ENCODE measurements at regions of chr1 and their contacts with region 1.

Region 1: GRCh38 chr1:18913065-18913835 is 10.9 kb upstream of the ALDH4A1 start:
- DNase-seq: no peak
- H3K4me3 ChIP-seq: no peak overlapping the region
- CTCF ChIP-seq: peak; percentile 100

Region 2: DNA sequence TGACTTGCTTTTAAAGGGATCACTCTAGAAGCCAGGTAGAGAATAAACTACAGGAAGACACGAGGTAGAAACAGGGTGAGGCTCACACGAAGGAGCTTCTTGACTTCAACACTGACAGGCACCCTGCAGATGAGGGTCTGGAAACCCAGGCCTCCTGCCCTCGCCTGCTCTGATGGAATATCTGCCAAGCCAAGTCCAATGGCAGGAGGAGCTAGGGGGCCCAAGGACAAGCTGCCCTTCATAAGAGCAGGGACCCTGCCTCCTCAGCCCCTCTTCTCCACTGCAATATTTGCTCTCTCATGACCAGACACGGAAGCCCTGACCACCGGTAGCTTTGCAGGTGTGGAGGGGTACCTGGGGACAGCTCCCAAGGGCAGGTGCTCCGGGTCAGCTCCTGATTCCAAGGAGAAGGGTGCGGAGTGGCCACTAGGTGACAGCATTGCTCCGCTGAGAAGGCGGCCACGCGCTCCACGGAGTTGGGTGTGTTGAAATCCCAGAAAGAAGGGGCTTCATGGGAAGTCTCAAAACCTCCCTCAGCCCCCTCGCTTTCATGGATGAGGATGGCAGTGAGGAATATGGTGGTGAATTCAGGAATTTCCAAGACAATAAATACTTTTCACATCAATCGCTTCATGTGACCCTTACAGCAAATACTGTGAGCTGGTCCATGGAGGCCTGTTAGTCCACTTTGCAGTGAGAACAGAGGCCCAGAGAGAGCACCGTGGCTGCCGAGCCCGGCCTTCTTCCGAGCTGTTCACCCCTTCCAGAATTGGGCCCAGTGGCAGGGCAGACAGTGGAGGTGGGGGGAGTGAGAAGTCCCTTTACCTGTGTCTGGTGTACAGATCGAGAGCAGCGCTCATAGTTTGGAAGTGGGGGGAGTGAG is 315.8 kb before region 1 on chr1:
- CTCF ChIA-PET with region 1: interaction called, 15 read pairs
- POLR2A ChIA-PET with region 1: no interaction called
- DNase-seq: no peak
- H3K4me3 ChIP-seq: no peak overlapping the region
- CTCF ChIP-seq: peak; percentile 92

Region 3: DNA sequence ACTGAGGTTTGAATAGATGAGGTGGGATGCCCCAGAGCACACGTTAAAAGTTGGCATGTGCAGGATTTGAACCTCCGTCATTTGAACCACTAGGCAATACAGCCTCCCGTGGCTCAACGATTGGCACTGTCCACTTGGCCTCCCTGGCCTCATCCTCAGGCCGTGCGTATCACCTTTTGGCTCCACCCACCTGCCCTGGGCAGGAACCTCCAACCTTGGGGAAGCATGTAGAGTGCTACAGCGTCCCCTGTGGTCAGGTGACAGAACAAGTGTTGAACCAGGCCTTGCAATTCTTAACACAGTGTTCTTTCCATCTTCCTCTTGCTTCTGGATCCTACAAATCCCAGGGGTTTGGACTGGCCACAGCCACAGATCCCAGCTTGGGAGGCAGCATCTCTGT is 170.0 kb before region 1 on chr1:
- CTCF ChIA-PET with region 1: no interaction called
- POLR2A ChIA-PET with region 1: no interaction called
- DNase-seq: no peak
- H3K4me3 ChIP-seq: no peak overlapping the region
- CTCF ChIP-seq: no peak

Region 4: GRCh38 chr1:18820791-18821641 is 92.2 kb before region 1 on chr1:
- CTCF ChIA-PET with region 1: no interaction called
- POLR2A ChIA-PET with region 1: no interaction called
- DNase-seq: no peak
- H3K4me3 ChIP-seq: no peak overlapping the region
- CTCF ChIP-seq: peak; percentile 97

Region 5: DNA sequence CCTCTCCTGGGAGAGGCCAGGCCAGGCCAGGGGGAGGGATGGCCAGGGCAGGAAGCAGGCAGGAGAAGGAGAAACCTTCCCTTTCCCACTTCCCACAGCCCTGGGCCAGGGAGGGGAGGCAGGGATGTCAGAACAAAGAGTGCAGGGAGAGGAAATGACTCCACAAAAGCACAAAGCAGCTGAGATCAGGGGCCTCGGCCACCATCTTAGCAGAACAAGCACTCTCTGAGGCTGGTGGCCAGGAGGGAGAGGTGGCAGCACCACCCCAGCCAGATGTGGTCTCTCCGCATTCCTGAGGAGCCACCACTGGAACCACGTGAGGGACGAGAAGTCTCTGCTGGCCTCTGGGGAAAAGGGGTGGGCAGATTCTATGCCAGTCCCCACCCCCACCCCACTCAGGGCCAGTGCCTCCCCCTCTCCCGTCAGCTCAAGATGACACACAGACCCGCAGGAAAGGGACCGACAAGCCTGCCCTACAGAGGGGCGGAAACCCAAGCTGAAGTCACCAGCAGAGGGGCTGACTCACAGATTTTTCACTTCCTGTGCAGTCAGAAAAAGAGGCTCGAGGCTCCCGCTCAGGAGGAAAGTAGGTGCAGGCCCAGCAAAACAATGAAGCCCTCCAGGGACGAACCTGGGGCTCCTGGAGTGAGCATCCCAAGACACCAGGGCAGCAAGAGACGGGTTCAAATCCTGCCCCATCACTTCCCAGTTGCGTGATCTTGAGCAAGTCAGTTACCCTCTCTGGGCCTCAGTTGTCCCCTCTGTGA is 13.2 kb after region 1 on chr1:
- CTCF ChIA-PET with region 1: interaction called, 212 read pairs
- POLR2A ChIA-PET with region 1: no interaction called
- DNase-seq: no peak
- H3K4me3 ChIP-seq: peak overlapping the region; percentile 28
- CTCF ChIP-seq: no peak

Region 6: GRCh38 chr1:18965206-18966173 is 52.2 kb after region 1 on chr1:
- CTCF ChIA-PET with region 1: interaction called, 46 read pairs
- POLR2A ChIA-PET with region 1: no interaction called
- DNase-seq: no peak
- H3K4me3 ChIP-seq: no peak overlapping the region
- CTCF ChIP-seq: no peak

Region 7: GRCh38 chr1:19010995-19011844 is 98.0 kb after region 1 on chr1:
- CTCF ChIA-PET with region 1: interaction called, 21 read pairs
- POLR2A ChIA-PET with region 1: no interaction called
- DNase-seq: peak; percentile 93
- H3K4me3 ChIP-seq: no peak overlapping the region
- CTCF ChIP-seq: no peak

Region 8: GRCh38 chr1:19054216-19054615 is 141.0 kb after region 1 on chr1:
- CTCF ChIA-PET with region 1: interaction called, 13 read pairs
- POLR2A ChIA-PET with region 1: no interaction called
- DNase-seq: no peak
- H3K4me3 ChIP-seq: no peak overlapping the region
- CTCF ChIP-seq: no peak

Region 9: GRCh38 chr1:19087737-19088594 is 174.7 kb after region 1 on chr1:
- CTCF ChIA-PET with region 1: interaction called, 117 read pairs
- POLR2A ChIA-PET with region 1: no interaction called
- DNase-seq: no peak
- H3K4me3 ChIP-seq: no peak overlapping the region
- CTCF ChIP-seq: no peak

Region 10: DNA sequence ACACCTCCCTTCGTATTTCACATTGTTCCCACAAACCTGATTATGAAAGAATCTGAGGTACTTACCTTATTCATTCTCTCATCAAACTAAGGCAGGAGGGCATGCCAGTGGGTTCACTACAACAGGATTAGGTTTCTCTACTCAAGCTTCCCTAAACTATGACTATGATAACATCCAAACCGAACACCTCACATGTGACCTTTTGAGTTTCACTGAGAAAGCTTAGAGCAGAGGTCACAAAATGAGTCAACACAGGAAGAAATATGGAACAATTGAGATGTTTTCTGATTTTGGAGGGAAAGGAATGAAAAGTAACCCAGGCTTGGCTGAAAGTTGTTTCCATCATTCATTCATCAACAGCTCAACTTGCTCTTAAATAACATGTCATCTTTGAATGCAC is 272.8 kb after region 1 on chr1:
- CTCF ChIA-PET with region 1: no interaction called
- POLR2A ChIA-PET with region 1: no interaction called
- DNase-seq: no peak
- H3K4me3 ChIP-seq: no peak overlapping the region
- CTCF ChIP-seq: no peak

Measured in AG04449 (cell line).